Left ventricle myocardium inferior (tissue), 1 donor: ENCODE measurements at regions of chr12 and their contacts with region 1.

Region 1: GRCh38 chr12:13203034-13203922 is 6.8 kb downstream of the EMP1 start:
- DNase-seq: peak; percentile 62
- H3K4me3 ChIP-seq: peak overlapping the region; percentile 71
- H3K27ac ChIP-seq: peak overlapping the region; percentile 94
- H3K4me1 ChIP-seq: peaks cover 98% of the 10 kb centered on the region
- H3K27me3 ChIP-seq: no peaks in the 10 kb centered on the region
- CTCF ChIP-seq: peak; percentile 52

Region 2: GRCh38 chr12:13100882-13101769 is 102.2 kb before region 1 on chr12:
- intact Hi-C with region 1: loop called (anchors 5 kb)
- DNase-seq: peak; percentile 91
- H3K4me3 ChIP-seq: peak overlapping the region; percentile 70
- H3K27ac ChIP-seq: peak overlapping the region; percentile 93
- H3K4me1 ChIP-seq: peaks cover 54% of the 10 kb centered on the region
- H3K27me3 ChIP-seq: no peaks in the 10 kb centered on the region
- CTCF ChIP-seq: peak; percentile 19